Lower lobe of right lung (tissue), 2 donors: ENCODE measurements at regions of chr22 and their contacts with region 1.

Region 1: DNA sequence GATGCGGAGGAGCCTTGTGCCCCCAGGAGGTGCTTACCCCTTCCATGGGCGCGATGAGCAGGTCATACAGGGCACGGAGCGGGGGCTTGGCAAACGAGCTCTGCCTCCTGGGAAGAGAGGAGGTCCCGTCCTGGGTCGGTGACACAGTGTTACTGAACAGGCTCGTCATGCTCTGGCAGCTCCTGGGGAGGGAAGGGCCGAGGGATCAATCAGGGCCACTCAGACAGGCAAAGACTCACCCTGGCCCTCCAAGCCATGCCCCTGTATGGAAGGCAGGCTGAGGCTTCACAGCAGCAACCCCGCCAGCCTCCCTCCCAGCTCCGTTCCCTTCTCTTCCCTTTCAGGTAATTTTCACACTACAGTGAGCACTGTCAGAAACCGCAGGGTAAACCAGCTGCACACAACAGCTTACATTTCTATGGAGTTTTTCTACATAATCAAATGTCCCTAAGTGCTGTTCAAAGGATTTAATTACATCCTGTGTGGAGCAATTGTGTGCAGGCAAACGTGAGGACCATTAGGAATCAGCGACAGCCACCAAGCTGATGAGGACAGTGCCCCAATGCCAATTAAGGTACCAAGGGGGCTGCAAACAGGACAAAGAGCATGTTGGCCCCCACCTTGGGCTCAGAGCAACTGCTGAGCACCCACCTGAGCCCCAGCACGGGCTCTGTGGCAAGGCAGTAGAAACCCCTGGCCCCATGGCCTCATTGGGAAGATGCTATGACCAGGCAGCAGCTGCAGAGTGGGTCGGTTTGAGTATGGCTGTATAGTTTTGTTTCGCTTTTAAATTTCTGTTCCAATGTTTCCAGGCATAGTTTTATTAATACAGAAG is 95.4 kb upstream of the PITPNB start:
- DNase-seq: peak; percentile 43
- ATAC-seq: no peak
- H3K4me3 ChIP-seq: no peak overlapping the region
- H3K27ac ChIP-seq: peak overlapping the region; percentile 27
- H3K4me1 ChIP-seq: peaks cover 14% of the 10 kb centered on the region
- H3K27me3 ChIP-seq: no peaks in the 10 kb centered on the region
- CTCF ChIP-seq: no peak

Region 2: DNA sequence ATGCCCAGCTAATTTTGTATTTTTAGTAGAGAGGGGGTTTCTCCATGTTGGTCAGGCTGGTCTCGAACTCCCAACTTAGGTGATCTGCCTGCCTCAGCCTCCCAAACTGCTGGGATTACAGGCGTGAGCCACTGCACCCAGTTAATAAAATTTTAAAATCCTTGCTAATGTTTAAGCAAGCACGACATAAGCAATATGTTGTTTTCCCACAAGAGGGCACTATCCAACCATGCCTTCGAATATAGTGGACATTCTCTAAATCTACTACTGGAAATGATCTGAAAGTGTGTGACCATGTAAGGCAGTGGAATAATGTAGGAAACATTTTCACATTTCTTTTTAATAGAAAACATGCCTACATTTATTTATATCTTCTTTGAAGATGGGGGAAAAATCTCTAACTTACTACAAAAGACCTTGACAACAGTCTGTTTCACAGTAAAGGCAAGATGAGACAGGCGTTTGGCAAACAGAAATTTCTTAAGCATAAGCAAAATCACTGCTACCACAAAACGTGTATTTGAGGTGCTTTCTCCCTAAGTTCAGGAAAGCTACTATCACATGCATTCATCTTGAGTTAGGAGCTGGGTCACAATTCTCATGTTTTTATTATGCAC is 133.5 kb before region 1 on chr22:
- intact Hi-C with region 1: loop called (anchors 5 kb)
- DNase-seq: no peak
- ATAC-seq: peak; percentile 85 to 86
- H3K4me3 ChIP-seq: no peak overlapping the region
- H3K27ac ChIP-seq: no peak overlapping the region
- H3K4me1 ChIP-seq: peaks cover 49% of the 10 kb centered on the region
- H3K27me3 ChIP-seq: no peaks in the 10 kb centered on the region
- CTCF ChIP-seq: peak; percentile 73